HAP-1 (cell line): ENCODE measurements at regions of chr12 and their contacts with region 1.

Region 1: GRCh38 chr12:26832822-26833742 is at the start of gene ITPR2:
- DNase-seq: peak; percentile 94 to 97
- H3K4me3 ChIP-seq: peak within 1 kb of the TSS; percentile 70
- H3K4me1 ChIP-seq: peaks cover 17% of the 10 kb centered on the region
- H3K27me3 ChIP-seq: no peaks in the 10 kb centered on the region

Region 2: DNA sequence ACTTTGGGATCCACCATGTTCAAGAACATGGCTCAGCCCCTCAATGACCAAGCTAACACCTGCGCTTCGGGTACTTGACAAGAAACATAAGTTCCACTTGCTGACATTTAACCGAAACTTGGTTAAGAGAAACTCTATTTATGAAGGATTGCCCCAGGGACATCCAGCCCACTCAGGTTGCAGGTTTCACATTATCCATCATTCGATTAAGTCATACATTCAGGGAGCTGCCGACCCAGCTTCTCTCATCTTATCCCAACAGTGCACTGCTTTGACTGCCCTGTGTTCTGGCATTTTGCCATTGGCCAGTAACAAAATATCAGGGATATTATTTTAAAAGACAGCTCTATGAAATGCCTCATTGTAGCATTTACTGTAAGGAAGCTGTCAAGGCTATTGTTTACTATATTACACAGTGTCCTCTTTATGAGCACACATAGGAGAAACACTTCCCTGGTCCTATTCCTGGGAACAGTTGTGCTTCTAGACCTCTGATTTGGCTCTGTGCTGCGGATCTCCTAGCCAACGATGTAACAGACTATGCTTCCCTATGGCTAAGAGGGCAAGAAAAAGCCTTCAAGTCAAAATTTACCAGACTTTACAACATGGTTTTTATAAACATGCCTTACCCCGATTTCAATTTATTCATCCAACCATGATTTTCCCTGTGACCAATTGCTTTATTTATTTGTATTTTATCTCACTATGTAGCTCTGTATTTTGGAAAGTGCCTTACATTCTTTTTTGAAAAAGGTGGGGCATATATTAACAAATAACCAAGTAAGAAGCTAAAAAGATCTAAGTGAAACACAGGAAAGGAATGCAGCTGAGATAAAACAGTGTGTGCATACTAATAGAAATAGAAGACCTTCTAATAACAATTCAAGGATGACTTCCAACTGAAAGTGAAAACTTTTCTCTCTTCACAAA is 109.4 kb before region 1 on chr12:
- in situ Hi-C with region 1: loop called (anchors 10 kb)
- DNase-seq: no peak
- H3K4me3 ChIP-seq: no peak overlapping the region
- H3K4me1 ChIP-seq: peaks cover 36% of the 10 kb centered on the region
- H3K27me3 ChIP-seq: no peaks in the 10 kb centered on the region

Region 3: GRCh38 chr12:26736563-26737486 is 96.3 kb before region 1 on chr12:
- in situ Hi-C with region 1: no loop called
- DNase-seq: no peak
- H3K4me3 ChIP-seq: no peak overlapping the region
- H3K4me1 ChIP-seq: peaks cover 7% of the 10 kb centered on the region
- H3K27me3 ChIP-seq: no peaks in the 10 kb centered on the region

Region 4: GRCh38 chr12:27064397-27065342 is 231.6 kb after region 1 on chr12:
- in situ Hi-C with region 1: no loop called
- DNase-seq: no peak
- H3K4me3 ChIP-seq: no peak overlapping the region
- H3K4me1 ChIP-seq: no peaks in the 10 kb centered on the region
- H3K27me3 ChIP-seq: no peaks in the 10 kb centered on the region